ENCODE measurements at regions of chr12 and their contacts with region 1.

Region 1: DNA sequence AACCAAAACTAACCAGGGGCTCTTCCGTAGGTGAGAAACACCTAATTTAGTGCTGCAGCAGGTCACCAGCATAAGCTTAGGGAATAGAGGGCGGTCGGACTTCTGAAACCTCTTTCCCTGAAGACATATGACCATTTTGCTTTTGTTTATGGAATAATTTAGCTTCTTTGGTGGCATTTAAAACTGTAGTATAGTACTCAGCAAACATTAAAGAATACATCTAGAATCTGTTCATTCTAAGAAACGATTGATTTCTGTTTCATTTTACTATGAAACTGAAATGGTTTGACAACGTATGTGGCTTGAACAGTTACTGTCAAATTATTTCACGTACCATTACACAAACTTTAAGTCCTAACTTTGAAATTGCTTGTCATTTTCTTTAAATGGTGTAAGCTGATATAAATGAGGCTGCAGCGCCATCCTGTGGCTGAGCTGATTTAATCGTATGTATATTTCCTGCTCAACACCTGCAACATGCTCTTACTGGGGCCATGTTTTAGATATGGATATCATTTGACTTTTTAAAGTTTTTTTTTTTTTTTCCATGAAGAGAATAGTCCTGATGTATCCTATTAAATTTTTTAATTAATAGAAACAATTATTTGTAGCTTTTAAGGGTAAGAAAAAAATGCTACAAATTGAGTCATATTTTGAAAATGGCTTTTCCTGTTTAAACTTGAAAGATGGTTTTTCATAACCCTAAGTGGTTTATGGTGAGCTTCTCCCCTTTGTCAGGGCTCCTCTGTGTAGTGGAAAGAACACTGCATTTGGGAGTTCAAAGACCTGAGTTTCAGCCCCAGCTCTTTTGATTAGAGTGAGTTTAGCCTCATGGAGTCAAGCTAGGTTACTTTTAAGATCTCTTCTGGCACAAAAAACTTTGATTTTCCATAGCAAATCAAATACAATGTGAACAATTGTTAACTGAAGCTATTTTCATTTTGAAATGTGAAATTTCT is 27.4 kb downstream of the CFAP54 start:
- DNase-seq: peak; percentile 32 to 44
- ATAC-seq: no peak
- H3K4me3 ChIP-seq: no peak overlapping the region
- H3K27ac ChIP-seq: no peak overlapping the region
- H3K4me1 ChIP-seq: no peaks in the 10 kb centered on the region
- H3K27me3 ChIP-seq: no peaks in the 10 kb centered on the region
- CTCF ChIP-seq: peak; percentile 37 to 56 (median 53)
- POLR2A ChIP-seq: no peak

Region 2: DNA sequence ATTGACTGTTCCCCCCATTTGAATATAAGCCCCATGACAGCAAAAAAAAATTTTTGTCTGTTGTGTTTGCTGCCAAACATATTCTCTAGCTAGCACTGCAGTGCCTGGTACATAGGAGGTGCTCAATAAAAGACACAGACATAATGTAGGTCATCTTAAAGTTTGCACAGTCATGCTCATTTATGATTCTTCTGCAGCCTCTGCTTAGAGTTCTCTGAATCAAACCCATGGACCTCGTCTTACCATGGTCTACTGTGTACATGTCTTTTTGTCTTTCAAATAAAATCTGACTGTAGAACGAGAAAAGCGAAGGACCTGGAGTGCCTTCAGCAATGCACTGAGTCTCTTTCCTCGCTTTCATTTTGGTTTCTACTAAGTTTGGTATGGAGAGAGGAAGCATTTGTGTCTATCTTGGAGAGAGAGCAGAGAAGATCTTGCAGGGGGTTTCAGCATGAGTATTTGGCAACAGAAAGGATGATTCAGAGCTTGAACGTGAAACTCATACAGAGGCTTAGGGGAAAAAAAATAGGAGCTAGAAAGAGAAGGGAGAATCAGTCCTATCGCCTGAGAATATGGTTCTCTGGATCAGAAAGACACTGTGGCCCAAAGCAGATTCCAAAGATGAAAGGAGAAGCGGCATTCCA is 1827.6 kb before region 1 on chr12:
- in situ Hi-C with region 1: no loop called
- intact Hi-C with region 1: no loop called
- DNase-seq: no peak
- ATAC-seq: no peak
- H3K4me3 ChIP-seq: peak overlapping the region in 1 of 4 donors; percentile 37
- H3K27ac ChIP-seq: peak overlapping the region in 1 of 4 donors; percentile 29
- H3K4me1 ChIP-seq: peaks cover 5 to 15% of the 10 kb centered on the region in 2 donors
- H3K27me3 ChIP-seq: no peaks in the 10 kb centered on the region
- CTCF ChIP-seq: no peak
- POLR2A ChIP-seq: no peak

Region 3: DNA sequence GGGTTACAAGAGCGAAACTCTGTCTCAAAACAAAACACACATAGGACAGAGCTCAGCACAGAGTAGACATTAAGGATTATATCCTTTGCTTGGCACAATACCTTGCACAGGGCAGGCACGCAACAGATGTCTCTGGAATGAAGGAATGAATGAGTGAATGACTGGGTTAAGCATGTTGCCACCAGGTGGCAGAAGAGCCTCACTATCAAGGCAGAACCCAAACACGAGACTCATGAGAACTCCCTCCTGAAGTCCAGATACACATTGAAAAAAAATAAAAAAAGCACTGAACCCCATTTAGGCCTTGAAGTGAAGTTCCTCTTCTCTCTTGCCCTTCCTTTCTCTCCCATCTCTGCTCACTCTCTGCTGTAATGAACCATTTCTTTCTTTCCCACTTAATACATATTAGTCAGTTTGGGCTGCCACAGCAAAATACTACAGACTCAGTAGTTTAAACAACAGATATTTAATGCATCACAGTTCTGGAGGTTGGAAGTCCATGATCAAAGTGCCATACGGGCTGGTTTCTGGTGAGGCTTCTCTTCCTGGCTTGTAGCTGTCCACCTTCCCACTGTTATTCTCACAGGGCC is 454.8 kb before region 1 on chr12:
- in situ Hi-C with region 1: loop called (anchors 5 to 25 kb)
- intact Hi-C with region 1: loop called (anchors 1 kb)
- DNase-seq: peak; percentile 32 to 42
- ATAC-seq: peak; percentile 52 to 62
- H3K4me3 ChIP-seq: no peak overlapping the region
- H3K27ac ChIP-seq: no peak overlapping the region
- H3K4me1 ChIP-seq: no peaks in the 10 kb centered on the region
- H3K27me3 ChIP-seq: no peaks in the 10 kb centered on the region
- CTCF ChIP-seq: peak; percentile 45 to 75 (median 72)
- POLR2A ChIP-seq: no peak

Region 4: GRCh38 chr12:96140174-96140573 is 376.6 kb before region 1 on chr12:
- in situ Hi-C with region 1: no loop called
- intact Hi-C with region 1: no loop called
- DNase-seq: no peak
- ATAC-seq: no peak
- H3K4me3 ChIP-seq: no peak overlapping the region
- H3K27ac ChIP-seq: no peak overlapping the region
- H3K4me1 ChIP-seq: no peaks in the 10 kb centered on the region
- H3K27me3 ChIP-seq: no peaks in the 10 kb centered on the region
- CTCF ChIP-seq: no peak
- POLR2A ChIP-seq: no peak